Activated CD4-positive, alpha-beta memory T cell treated with anti-CD3 and anti-CD28 coated beads for 36 hours (primary cell): ENCODE measurements at regions of chr2 and their contacts with region 1.

Region 1: GRCh38 chr2:97728091-97728731 is 14.8 kb downstream of the ZAP70 start:
- DNase-seq: peak; percentile 47
- H3K4me3 Mint-ChIP-seq: no peak overlapping the region
- H3K27ac Mint-ChIP-seq: peak overlapping the region; percentile 40
- H3K4me1 Mint-ChIP-seq: peaks cover 51% of the 10 kb centered on the region
- H3K27me3 Mint-ChIP-seq: no peaks in the 10 kb centered on the region

Region 2: GRCh38 chr2:97710596-97711386 is 17.4 kb before region 1 on chr2:
- CTCF ChIA-PET with region 1: interaction called, 14 read pairs
- POLR2A ChIA-PET with region 1: interaction called, 12 read pairs
- intact Hi-C with region 1: no loop called
- DNase-seq: peak; percentile 43
- H3K4me3 Mint-ChIP-seq: no peak overlapping the region
- H3K27ac Mint-ChIP-seq: peak overlapping the region; percentile 58
- H3K4me1 Mint-ChIP-seq: peaks cover 42% of the 10 kb centered on the region
- H3K27me3 Mint-ChIP-seq: no peaks in the 10 kb centered on the region

Region 3: DNA sequence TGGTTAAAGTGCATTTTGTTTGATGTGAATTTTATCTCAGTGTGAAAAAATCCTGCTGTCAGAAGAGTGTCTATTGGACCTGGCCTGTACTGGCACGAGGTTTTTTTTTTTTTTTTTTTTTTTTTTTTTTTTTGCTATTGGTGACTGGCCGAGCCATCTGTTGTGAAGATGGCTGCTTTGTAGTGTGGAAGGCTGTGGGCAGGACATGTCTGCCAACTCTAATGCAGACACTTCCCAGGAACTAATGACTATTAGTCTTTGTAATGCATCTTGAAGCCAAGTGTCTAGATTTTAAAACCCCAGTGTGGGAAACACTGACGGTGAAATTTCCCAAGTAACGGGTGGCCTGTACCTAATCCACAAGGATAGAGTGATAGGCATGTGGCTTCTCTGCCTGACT is 19.5 kb after region 1 on chr2:
- CTCF ChIA-PET with region 1: interaction called, 37 read pairs
- POLR2A ChIA-PET with region 1: no interaction called
- intact Hi-C with region 1: no loop called
- DNase-seq: peak; percentile 3
- H3K4me3 Mint-ChIP-seq: no peak overlapping the region
- H3K27ac Mint-ChIP-seq: no peak overlapping the region
- H3K4me1 Mint-ChIP-seq: peaks cover 43% of the 10 kb centered on the region
- H3K27me3 Mint-ChIP-seq: no peaks in the 10 kb centered on the region